Activated T-helper 1 cell treated with anti-CD3 and anti-CD28 coated beads, Interleukin-12 subunit alpha, Interleukin-12 subunit beta, Interleukin-2, Interleukin-4 antibody, amounts not matched to agents 30 ng/mL and 10 ng/mL and 1 ng/mL, durations not matched to agents 14 hours and 24 hours and 36 hours (primary cell): ENCODE measurements at regions of chr4 and their contacts with region 1.

Region 1: DNA sequence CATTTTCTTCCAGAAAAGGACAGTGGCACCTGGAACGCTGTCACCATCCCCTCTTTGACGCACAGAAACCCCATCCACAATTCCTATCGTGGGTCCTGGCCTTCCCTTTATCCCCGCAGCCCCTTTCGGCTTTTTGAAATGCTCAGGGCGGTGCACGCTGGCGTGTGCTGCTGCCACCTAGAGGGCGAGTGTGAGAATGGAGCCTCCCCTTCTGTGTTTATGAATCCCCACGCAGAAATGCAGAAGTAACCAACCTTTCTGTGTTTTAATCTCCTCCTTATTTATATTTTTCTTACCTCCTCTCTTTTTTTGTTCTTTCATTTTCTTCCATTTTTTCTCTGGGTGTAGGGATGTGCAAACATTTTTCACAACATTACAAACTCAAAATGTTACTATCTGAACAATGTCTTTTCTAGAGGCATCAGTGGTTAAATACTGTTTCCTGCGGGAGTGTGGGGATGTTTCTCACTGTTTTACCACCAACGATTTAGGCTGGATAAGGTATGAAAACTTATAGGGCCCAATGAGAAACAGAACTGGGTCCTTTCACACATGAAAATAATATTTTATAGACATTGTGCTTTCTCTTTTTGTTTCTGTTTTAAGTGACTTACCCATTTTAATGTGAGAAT is 50.0 kb downstream of the TMA16 start:
- DNase-seq: peak; percentile 26
- H3K4me3 Mint-ChIP-seq: no peak overlapping the region
- H3K27ac Mint-ChIP-seq: no peak overlapping the region
- H3K4me1 Mint-ChIP-seq: no peaks in the 10 kb centered on the region
- H3K27me3 Mint-ChIP-seq: no peaks in the 10 kb centered on the region

Region 2: GRCh38 chr4:162891788-162892707 is 652.5 kb before region 1 on chr4:
- intact Hi-C with region 1: loop called (anchors 10 kb)
- DNase-seq: no peak
- H3K4me3 Mint-ChIP-seq: no peak overlapping the region
- H3K27ac Mint-ChIP-seq: no peak overlapping the region
- H3K4me1 Mint-ChIP-seq: peaks cover 9% of the 10 kb centered on the region
- H3K27me3 Mint-ChIP-seq: peaks cover 14% of the 10 kb centered on the region

Region 3: DNA sequence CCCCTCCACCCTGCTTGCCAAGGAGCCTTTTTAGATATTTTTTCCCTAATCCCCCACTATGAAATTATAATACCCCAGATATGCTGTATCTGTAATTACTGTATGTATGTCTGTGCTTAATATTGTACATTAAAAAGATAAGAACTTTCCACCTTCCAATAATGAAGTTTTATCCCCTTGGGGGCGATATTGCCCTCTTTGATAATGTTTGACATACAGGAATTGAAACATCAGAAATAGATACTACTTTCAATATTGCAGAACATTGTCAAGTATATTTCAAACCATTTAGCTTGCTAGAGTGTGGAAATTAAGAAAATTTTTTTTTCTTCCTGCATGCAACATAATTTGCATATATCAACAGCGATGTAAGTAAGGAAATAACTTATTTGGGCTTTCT is 436.8 kb before region 1 on chr4:
- intact Hi-C with region 1: loop called (anchors 2 kb)
- DNase-seq: no peak
- H3K4me3 Mint-ChIP-seq: no peak overlapping the region
- H3K27ac Mint-ChIP-seq: no peak overlapping the region
- H3K4me1 Mint-ChIP-seq: peaks cover 23% of the 10 kb centered on the region
- H3K27me3 Mint-ChIP-seq: no peaks in the 10 kb centered on the region

Region 4: GRCh38 chr4:163157157-163157556 is 387.4 kb before region 1 on chr4:
- intact Hi-C with region 1: no loop called
- DNase-seq: no peak
- H3K4me3 Mint-ChIP-seq: no peak overlapping the region
- H3K27ac Mint-ChIP-seq: no peak overlapping the region
- H3K4me1 Mint-ChIP-seq: peaks cover 26% of the 10 kb centered on the region
- H3K27me3 Mint-ChIP-seq: no peaks in the 10 kb centered on the region

Region 5: DNA sequence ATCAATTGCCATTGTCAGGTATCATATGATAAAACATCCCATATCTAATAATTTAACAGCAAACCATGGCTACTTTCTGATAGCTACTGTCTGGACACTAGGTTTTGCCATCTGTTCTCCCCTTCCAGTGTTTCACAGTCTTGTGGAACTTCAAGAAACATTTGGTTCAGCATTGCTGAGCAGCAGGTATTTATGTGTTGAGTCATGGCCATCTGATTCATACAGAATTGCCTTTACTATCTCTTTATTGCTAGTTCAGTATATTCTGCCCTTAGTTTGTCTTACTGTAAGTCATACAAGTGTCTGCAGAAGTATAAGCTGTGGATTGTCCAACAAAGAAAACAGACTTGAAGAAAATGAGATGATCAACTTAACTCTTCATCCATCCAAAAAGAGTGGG is 193.9 kb before region 1 on chr4:
- intact Hi-C with region 1: loop called (anchors 10 kb)
- DNase-seq: no peak
- H3K4me3 Mint-ChIP-seq: no peak overlapping the region
- H3K27ac Mint-ChIP-seq: no peak overlapping the region
- H3K4me1 Mint-ChIP-seq: no peaks in the 10 kb centered on the region
- H3K27me3 Mint-ChIP-seq: peaks cover 5% of the 10 kb centered on the region

Region 6: DNA sequence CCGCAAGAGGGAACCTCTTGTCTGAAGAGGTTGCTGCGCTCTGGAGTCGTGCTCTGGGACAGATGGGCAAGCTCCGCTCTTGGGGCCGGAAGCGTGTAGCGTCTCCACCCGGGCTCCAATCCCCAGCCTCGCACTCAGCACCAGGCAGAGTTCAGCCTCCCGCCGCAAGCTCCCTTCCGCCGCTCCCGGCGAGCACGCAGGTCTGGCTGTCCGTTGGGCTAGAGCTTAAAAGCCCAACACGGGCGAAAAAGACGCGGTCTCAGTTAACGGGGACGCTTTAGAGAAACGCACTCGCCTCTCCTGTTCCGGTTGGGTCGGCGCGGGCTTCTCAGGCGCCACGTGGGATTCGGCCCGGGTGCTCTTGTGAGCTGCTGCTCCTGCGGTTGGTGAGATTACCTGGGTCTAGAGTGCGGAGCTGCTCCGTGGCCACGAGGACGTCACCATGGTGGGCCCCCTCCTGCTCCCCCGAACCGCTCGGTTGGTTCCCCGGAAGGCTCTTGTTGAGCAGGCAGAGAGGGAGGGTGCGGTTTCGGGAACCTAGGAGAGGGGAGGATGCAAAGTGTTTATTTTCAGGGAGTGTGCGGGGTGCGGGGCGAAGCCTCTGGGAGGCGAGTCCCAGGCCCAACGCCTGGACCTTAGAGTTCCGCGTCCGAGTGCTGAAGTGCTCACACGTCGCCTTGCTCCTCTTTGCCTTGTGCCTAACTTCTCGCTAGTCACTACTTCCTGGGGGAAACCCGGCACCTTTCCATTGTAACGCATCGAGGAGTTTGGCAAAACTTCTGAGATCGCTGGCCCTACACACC is 50.0 kb before region 1 on chr4 and contains the start of gene TMA16:
- intact Hi-C with region 1: loop called (anchors 1 kb)
- DNase-seq: peak; percentile 84
- H3K4me3 Mint-ChIP-seq: peak within 1 kb of the TSS; percentile 90
- H3K27ac Mint-ChIP-seq: peak within 1 kb of the TSS; percentile 98
- H3K4me1 Mint-ChIP-seq: peaks cover 23% of the 10 kb centered on the region
- H3K27me3 Mint-ChIP-seq: peaks cover 3% of the 10 kb centered on the region
- total RNA-seq, gene TMA16: 76.3 and 80.8 TPM in 2 replicates

Region 7: GRCh38 chr4:163568843-163569242 is 24.3 kb after region 1 on chr4:
- intact Hi-C with region 1: no loop called
- DNase-seq: no peak
- H3K4me3 Mint-ChIP-seq: no peak overlapping the region
- H3K27ac Mint-ChIP-seq: no peak overlapping the region
- H3K4me1 Mint-ChIP-seq: no peaks in the 10 kb centered on the region
- H3K27me3 Mint-ChIP-seq: no peaks in the 10 kb centered on the region

Region 8: DNA sequence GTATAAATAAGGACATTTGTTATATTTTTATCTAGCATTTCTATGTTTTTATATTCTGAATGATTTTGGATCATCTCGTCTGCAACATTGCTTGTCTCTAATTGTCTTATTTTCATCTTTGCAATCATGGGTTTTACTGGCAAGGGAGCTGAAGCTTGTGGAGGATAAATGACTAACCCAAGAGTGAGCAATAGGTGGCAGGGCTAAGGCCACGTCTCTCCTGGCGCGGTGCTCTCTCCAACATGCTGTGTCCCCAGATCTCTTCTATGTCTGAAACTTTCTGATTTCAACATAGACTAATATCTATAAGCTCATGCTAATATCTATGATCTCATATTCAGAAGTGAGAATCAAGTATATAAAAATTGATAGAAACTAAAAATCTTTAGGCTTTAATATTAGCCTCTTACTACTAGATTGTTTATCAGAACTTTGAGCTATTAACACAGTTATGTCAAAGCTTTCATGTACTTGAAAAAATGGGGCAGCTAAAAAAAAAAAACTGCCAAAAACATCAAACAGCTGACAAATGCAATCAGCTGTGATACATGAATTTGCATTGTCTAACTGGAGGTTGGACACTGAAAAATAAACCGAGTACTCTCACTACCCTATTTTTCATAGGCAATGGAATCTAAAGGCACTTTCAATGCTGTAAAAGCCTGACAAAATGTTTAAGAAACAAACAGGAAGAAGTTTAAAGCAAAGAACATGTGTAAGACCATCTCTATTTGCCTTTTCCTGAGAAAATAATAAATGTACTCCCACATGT is 119.1 kb after region 1 on chr4:
- intact Hi-C with region 1: no loop called
- DNase-seq: no peak
- H3K4me3 Mint-ChIP-seq: no peak overlapping the region
- H3K27ac Mint-ChIP-seq: no peak overlapping the region
- H3K4me1 Mint-ChIP-seq: no peaks in the 10 kb centered on the region
- H3K27me3 Mint-ChIP-seq: no peaks in the 10 kb centered on the region